ENCODE measurements at regions of chr3 and their contacts with region 1.

Region 1: DNA sequence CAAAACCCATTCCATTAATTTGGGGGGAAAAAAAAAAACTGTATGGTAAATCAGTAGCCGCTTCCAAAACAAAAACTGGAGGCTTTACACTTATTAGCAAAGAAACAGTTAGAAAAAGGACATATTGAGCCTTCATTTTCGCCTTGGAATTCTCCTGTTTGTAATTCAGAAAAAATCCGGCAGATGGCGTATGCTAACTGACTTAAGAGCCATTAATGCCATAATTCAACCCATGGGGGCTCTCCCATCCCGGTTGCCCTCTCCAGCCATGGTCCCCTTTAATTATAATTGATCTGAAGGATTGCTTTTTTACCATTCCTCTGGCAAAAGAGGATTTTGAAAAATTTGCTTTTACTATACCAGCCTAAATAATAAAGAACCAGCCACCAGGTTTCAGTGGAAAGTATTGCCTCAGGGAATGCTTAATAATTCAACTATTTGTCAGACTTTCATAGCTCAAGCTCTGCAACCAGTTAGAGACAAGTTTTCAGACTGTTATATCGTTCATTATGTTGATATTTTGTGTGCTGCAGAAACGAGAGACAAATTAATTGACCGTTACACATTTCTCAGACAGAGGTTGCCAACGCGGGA is 9.4 kb upstream of the RPL24 start:
- DNase-seq: peak; percentile 85
- H3K4me3 ChIP-seq: peak overlapping the region; percentile 13
- H3K27ac ChIP-seq: no peak overlapping the region
- H3K4me1 ChIP-seq: peaks cover 19% of the 10 kb centered on the region
- H3K27me3 ChIP-seq: no peaks in the 10 kb centered on the region
- CTCF ChIP-seq: peak; percentile 67

Region 2: GRCh38 chr3:101803173-101803782 is 107.4 kb after region 1 on chr3:
- CTCF ChIA-PET with region 1: no interaction called
- POLR2A ChIA-PET with region 1: no interaction called
- intact Hi-C with region 1: loop called (anchors 2 kb)
- DNase-seq: peak; percentile 84
- H3K4me3 ChIP-seq: no peak overlapping the region
- H3K27ac ChIP-seq: no peak overlapping the region
- H3K4me1 ChIP-seq: no peaks in the 10 kb centered on the region
- H3K27me3 ChIP-seq: no peaks in the 10 kb centered on the region
- CTCF ChIP-seq: peak; percentile 91

Region 3: DNA sequence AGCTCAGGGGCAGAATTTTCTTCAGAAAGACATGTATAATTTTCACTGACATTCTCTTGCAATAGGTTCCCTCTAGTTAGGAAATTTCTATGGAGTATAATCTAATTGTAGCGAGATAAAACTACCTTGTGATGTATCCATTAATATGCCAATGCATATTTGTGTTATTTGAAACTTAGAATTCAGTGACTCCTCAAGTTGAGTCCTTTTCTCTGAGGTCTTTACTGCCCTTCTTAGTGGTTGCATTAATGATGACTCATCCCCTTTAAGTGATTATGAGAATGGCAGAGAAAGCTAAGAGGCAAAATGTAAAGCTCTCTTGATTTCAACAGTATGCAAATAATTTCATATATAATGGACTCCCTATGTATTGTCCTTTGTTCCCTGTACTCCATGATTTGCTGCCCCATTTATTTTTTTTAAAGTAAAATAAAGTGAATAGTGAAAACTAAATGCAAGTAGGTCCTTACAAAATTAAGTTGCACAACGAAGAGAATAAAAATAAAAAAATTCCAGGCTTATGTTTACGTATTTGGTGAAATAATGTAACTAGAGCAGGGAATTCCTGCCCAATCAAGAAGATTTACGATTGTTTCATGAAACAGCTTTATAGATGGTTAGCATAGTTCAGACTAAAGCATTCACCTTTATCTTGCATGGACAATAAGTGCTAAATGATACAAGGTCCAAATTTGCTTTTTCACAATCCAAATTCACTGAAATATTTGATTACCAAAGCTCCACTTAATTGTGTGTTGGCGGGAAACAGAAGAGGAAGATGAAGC is 817.0 kb after region 1 on chr3:
- CTCF ChIA-PET with region 1: no interaction called
- POLR2A ChIA-PET with region 1: no interaction called
- intact Hi-C with region 1: loop called (anchors 10 kb)
- DNase-seq: peak; percentile 92
- H3K4me3 ChIP-seq: peak overlapping the region; percentile 43
- H3K27ac ChIP-seq: peak overlapping the region; percentile 85
- H3K4me1 ChIP-seq: peaks cover 45% of the 10 kb centered on the region
- H3K27me3 ChIP-seq: no peaks in the 10 kb centered on the region
- CTCF ChIP-seq: no peak